ENCODE measurements at regions of chrX and their contacts with region 1.

Region 1: GRCh38 chrX:30504309-30504708 is 73.3 kb downstream of the TASL start:
- DNase-seq: no peak
- H3K4me3 ChIP-seq: no peak overlapping the region
- H3K27ac ChIP-seq: no peak overlapping the region
- H3K4me1 ChIP-seq: no peaks in the 10 kb centered on the region
- H3K27me3 ChIP-seq: peaks cover 15% of the 10 kb centered on the region
- CTCF ChIP-seq: peak; percentile 37 to 63 (median 52)
- POLR2A ChIP-seq: no peak

Region 2: GRCh38 chrX:30270639-30271038 is 233.7 kb before region 1 on chrX:
- intact Hi-C with region 1: loop called in 1 of 2 experiments (anchors 5 kb)
- DNase-seq: no peak
- H3K4me3 ChIP-seq: no peak overlapping the region
- H3K27ac ChIP-seq: no peak overlapping the region
- H3K4me1 ChIP-seq: no peaks in the 10 kb centered on the region
- H3K27me3 ChIP-seq: peaks cover 6% of the 10 kb centered on the region
- CTCF ChIP-seq: no peak
- POLR2A ChIP-seq: no peak